GM23248 (cell line): ENCODE measurements at regions of chr2 and their contacts with region 1.

Region 1: GRCh38 chr2:33599175-33599942 is at the start of gene FAM98A:
- DNase-seq: peak; percentile 100
- H3K4me3 ChIP-seq: peak within 1 kb of the TSS; percentile 82
- H3K27ac ChIP-seq: peak within 1 kb of the TSS; percentile 86
- H3K4me1 ChIP-seq: peaks cover 42% of the 10 kb centered on the region
- H3K27me3 ChIP-seq: no peaks in the 10 kb centered on the region
- total RNA-seq, gene FAM98A: 24.2 and 29.2 TPM in 2 replicates

Region 2: DNA sequence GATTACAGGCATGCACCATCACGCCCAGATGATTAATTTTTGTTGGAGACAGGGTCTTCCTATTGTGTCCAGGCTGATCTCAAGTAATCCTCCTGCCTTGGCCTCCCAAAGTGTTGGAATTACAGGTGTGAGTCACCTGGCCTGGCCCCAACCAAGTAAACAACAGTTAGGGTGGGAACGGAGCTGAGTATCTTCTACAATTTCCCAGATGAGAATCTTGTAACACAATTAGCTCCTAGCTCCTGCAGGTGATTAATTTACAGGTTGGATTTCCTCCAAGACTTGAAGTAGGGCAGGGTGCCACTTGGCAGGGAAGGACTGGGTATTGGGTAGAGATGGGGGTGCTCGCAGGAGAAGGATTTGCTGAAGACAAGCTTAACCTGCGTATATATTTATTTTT is 1352.4 kb before region 1 on chr2:
- in situ Hi-C with region 1: no loop called
- DNase-seq: no peak
- H3K4me3 ChIP-seq: no peak overlapping the region
- H3K27ac ChIP-seq: no peak overlapping the region
- H3K4me1 ChIP-seq: no peaks in the 10 kb centered on the region
- H3K27me3 ChIP-seq: no peaks in the 10 kb centered on the region

Region 3: DNA sequence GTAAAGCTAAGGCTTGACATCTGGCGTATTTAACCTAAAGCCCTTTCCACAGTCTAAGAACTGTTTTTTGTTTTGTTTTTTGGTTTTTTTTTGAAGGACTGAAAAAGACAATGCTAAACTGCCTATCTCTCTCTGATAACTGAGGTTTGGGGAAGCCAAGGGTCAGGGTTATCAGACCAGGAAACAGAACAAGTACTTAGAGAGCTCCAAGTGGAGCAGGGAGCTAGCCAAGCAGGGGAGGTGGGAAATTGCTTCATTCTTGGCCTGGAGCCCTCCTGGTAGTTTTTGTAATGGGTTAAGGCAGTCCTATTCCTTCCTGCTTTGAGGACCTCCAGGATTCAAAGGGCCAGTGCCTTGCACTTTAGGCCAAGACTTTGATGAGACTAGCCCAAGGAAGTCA is 806.9 kb before region 1 on chr2:
- in situ Hi-C with region 1: loop called (anchors 25 kb)
- DNase-seq: no peak
- H3K4me3 ChIP-seq: no peak overlapping the region
- H3K27ac ChIP-seq: no peak overlapping the region
- H3K4me1 ChIP-seq: no peaks in the 10 kb centered on the region
- H3K27me3 ChIP-seq: no peaks in the 10 kb centered on the region

Region 4: GRCh38 chr2:33275689-33276444 is 323.5 kb before region 1 on chr2:
- in situ Hi-C with region 1: loop called (anchors 25 kb)
- DNase-seq: peak; percentile 99
- H3K4me3 ChIP-seq: no peak overlapping the region
- H3K27ac ChIP-seq: peak overlapping the region; percentile 87
- H3K4me1 ChIP-seq: peaks cover 26% of the 10 kb centered on the region
- H3K27me3 ChIP-seq: no peaks in the 10 kb centered on the region

Region 5: DNA sequence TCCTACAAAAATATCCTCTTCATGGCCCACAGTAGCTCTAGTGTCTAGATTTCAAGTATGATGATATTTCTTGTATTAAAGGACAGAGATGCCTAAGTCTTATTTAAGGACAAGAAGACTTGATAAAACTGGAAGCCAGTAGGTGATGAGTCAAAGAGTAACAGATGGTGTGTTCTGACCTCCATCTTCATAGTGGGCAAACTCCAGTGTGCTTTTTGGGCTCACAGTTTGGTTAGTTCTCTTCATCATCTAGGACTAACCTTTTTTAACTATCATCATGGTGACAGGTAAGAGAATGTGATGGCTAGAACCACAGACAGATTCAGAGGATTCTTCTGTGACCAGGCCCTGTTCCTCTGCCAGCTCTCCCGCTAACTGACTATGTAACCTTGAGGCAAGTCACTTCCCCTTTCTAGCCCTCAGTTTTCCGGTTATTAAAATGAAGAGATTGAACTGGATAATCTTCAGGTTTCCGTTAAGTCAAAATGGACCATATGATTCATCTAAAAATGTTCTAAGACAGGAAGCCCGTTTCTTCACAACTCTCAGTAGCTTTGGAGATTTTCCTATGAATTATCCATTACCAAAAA is 263.2 kb before region 1 on chr2:
- in situ Hi-C with region 1: no loop called
- DNase-seq: no peak
- H3K4me3 ChIP-seq: no peak overlapping the region
- H3K27ac ChIP-seq: no peak overlapping the region
- H3K4me1 ChIP-seq: peaks cover 9% of the 10 kb centered on the region
- H3K27me3 ChIP-seq: no peaks in the 10 kb centered on the region